ENCODE measurements at regions of chr5 and their contacts with region 1.

Region 1: GRCh38 chr5:78648359-78649210 is at the start of gene LHFPL2:
- DNase-seq: no peak
- ATAC-seq: peak; percentile 66
- H3K4me3 ChIP-seq: peak within 1 kb of the TSS; percentile 76
- H3K27ac ChIP-seq: peak within 1 kb of the TSS; percentile 78
- H3K4me1 ChIP-seq: peaks cover 19% of the 10 kb centered on the region
- H3K27me3 ChIP-seq: no peaks in the 10 kb centered on the region
- CTCF ChIP-seq: no peak
- EP300 ChIP-seq: no peak
- POLR2A ChIP-seq: peak; percentile 62
- RAD21 ChIP-seq: 0 out of 2 replicates have a peak, but pooled peaks have one; percentile 14
- polyA plus RNA-seq, gene LHFPL2: 4.1 to 4.5 TPM

Region 2: GRCh38 chr5:78574731-78575161 is 73.8 kb before region 1 on chr5:
- CTCF ChIA-PET with region 1: interaction called, 4 read pairs
- POLR2A ChIA-PET with region 1: interaction called, 5 read pairs
- RAD21 ChIA-PET with region 1: interaction called, 4 read pairs
- SMC1A ChIA-PET with region 1: interaction called, 30 read pairs
- in situ Hi-C with region 1: no loop called
- intact Hi-C with region 1: loop called (anchors 5 kb)
- DNase-seq: peak; percentile 64
- ATAC-seq: peak; percentile 95
- H3K4me3 ChIP-seq: peak overlapping the region; percentile 1; the same call in 1 of the 2 replicates
- H3K27ac ChIP-seq: peak overlapping the region; percentile 93
- H3K4me1 ChIP-seq: peaks cover 25% of the 10 kb centered on the region
- H3K27me3 ChIP-seq: no peaks in the 10 kb centered on the region
- CTCF ChIP-seq: no peak
- EP300 ChIP-seq: no peak; a peak in 1 of 4 replicates
- POLR2A ChIP-seq: 0 out of 2 replicates have a peak, but pooled peaks have one; percentile 30
- RAD21 ChIP-seq: no peak

Region 3: DNA sequence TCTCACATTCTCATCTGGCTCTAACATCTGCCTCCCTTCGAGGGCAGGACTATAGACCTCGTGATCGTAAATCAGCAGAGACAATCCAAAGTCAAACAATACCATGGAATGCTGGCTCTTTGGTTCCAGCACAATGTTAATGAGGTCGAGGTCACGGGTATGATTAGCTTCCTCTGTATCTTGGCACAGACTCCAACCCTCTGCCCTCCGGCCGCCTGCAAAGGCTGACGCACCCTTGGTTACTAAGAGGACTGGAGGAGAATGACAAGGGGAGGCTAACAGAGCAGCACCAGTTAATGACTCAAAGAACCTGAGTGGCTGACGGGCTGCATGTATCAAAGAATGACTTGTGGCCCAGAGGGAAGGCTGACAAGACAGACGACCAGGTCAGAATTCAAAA is 10.2 kb before region 1 on chr5:
- CTCF ChIA-PET with region 1: interaction called, 8 read pairs
- POLR2A ChIA-PET with region 1: interaction called, 11 read pairs
- RAD21 ChIA-PET with region 1: interaction called, 11 read pairs
- SMC1A ChIA-PET with region 1: interaction called, 22 read pairs
- in situ Hi-C with region 1: no loop called
- intact Hi-C with region 1: no loop called
- DNase-seq: no peak
- ATAC-seq: no peak
- H3K4me3 ChIP-seq: no peak overlapping the region
- H3K27ac ChIP-seq: no peak overlapping the region
- H3K4me1 ChIP-seq: peaks cover 24% of the 10 kb centered on the region
- H3K27me3 ChIP-seq: no peaks in the 10 kb centered on the region
- CTCF ChIP-seq: no peak
- EP300 ChIP-seq: no peak
- POLR2A ChIP-seq: no peak
- RAD21 ChIP-seq: no peak

Region 4: DNA sequence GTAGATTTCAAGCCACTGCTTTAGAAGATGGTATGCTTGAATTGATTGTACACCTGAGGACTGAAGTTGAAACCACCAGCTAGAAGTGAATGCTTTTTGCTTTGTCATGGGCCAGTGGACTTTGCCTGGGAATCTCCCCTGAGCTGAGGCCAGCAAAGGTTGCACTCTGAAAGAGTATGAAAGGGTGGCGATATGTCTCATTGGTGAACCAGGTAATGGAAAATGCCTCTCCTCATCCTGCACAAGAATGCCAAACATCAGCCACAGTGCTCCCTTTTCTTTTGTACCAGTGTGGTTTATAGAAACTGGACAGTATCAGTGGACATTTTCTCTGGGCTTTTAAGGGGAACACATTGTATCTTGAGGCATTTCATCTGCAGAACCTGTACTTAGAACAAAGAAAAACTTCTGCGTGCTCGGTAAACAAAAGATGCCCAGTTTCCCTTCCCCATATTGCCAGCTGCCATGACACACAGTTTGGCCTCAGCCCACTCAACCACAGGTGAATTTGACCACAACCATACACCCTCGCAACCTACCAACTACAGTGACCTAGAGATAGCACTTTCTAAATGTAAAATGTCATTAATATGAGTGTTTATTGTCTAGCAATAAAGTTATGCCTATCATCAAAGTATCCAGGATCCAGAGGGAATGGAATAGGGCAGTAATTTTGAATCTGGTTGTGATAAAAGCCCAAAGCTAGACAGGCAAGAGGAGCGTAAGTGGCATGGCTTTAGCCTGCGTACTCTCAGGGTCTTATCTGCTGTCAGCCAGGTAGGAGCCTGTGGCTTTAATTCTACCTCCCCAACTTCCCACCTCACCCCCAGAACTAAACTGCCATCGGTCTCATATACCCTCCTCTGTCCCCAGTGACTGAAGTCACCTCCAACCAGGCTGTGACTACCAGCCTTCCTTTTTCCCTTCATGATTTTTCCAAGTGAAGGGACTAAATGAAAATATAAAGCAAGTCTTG is 79.5 kb after region 1 on chr5:
- CTCF ChIA-PET with region 1: interaction called, 3 read pairs
- POLR2A ChIA-PET with region 1: interaction called, 3 read pairs
- RAD21 ChIA-PET with region 1: interaction called, 5 read pairs
- SMC1A ChIA-PET with region 1: interaction called, 50 read pairs
- in situ Hi-C with region 1: no loop called
- intact Hi-C with region 1: loop called (anchors 2 kb)
- DNase-seq: peak; percentile 96
- ATAC-seq: peak; percentile 91
- H3K4me3 ChIP-seq: peak overlapping the region; percentile 14; the same call in 1 of the 2 replicates
- H3K27ac ChIP-seq: peak overlapping the region; percentile 96
- H3K4me1 ChIP-seq: peaks cover 48% of the 10 kb centered on the region
- H3K27me3 ChIP-seq: no peaks in the 10 kb centered on the region
- CTCF ChIP-seq: no peak
- EP300 ChIP-seq: peak; percentile 92 to 95
- POLR2A ChIP-seq: no peak; the same call in 1 of the 2 replicates
- RAD21 ChIP-seq: no peak

Region 5: DNA sequence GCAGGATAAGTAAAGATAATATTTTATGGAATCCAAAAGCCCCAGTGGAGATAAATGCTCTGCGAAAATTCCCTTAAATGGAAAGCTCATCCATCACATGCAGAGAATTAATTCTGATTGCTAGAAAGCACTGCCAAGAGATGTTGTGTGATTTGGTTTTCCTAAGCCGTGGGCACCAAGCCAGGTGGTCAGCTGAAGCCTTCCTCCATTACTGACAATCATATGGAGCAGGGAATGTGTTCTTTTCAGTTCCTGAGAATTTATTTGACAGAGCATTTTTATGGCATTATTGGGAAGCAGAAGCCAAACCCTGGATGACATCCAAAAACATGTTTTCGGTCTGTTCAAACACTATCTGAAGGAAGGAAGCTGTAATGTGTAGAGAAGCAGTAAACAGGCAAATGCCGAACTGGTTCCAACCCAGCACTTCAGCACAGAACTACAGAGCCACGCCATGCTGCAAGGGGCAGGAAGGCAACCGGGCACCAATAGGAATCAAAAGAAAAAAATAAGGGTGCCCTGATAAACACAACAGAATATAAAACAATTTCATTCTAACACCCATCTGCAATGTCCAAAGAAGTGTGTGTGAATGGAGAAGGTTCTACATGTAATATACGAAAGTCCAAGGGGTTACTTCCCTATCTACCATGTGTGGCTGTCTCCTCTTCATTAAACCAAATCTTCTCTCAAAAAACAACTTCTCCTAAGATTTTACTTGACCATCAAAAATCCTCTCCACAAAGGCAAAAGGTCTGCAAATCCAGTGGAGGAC is 324.3 kb after region 1 on chr5:
- CTCF ChIA-PET with region 1: no interaction called
- POLR2A ChIA-PET with region 1: no interaction called
- RAD21 ChIA-PET with region 1: no interaction called
- SMC1A ChIA-PET with region 1: no interaction called
- in situ Hi-C with region 1: no loop called
- intact Hi-C with region 1: loop called (anchors 10 kb)
- DNase-seq: no peak
- ATAC-seq: no peak
- H3K4me3 ChIP-seq: no peak overlapping the region
- H3K27ac ChIP-seq: no peak overlapping the region
- H3K4me1 ChIP-seq: peaks cover 4% of the 10 kb centered on the region; the same call in 1 of the 2 replicates
- H3K27me3 ChIP-seq: no peaks in the 10 kb centered on the region
- CTCF ChIP-seq: no peak
- EP300 ChIP-seq: no peak
- POLR2A ChIP-seq: no peak
- RAD21 ChIP-seq: no peak